Activated T-helper 2 cell treated with anti-CD3 and anti-CD28 coated beads, Interferon-gamma antibody, Interleukin-2, Interleukin-4, amounts not matched to agents 10 μg/mL and 5 μg/mL and 100 μg/mL, durations not matched to agents 14 hours and 24 hours and 36 hours (primary cell): ENCODE measurements at regions of chr7 and their contacts with region 1.

Region 1: DNA sequence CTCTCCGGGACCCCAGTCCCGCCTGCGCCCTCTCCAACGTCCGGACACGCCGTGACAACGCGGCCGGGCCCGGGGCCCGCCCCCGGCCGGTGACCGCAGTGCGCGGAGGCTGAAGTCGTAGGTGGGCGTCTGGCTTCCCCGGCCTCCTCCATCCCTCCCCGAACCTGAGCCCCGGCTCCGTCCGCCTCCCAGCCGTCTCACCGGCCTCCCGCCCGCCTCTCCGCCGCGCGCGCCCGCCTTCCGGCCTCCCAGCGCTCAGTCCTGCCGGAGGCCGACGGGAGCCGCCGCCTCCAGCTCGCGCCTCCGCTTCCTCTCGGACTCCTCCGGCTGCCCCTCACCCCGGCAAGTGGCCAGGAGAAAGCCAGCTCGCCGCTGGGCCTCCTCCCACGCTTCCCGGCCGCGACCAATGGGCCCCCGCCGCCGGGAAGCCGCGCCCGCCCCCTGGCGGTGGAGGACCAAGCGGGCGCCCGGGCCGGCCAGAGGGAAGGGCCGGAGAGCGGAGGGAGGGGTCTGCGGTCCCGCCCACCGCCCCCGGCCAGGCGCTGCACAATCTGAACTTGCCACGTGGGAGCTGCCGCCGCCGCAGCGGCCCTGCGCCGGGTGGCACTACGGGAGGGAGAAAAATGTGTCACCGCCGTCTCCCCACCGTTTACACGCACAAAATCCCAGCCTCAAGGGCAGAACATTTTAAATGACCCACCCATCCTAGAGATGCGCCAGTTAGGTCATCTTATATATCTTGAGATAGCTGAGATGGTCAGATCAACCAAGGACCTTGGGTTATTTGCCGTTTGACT is at the start of gene FAM3C:
- DNase-seq: peak; percentile 78
- H3K4me3 Mint-ChIP-seq: peak within 1 kb of the TSS; percentile 88
- H3K27ac Mint-ChIP-seq: peak within 1 kb of the TSS; percentile 91
- H3K4me1 Mint-ChIP-seq: peaks cover 34% of the 10 kb centered on the region
- H3K27me3 Mint-ChIP-seq: no peaks in the 10 kb centered on the region
- total RNA-seq, gene FAM3C: 57.6 and 59.5 TPM in 2 replicates

Region 2: GRCh38 chr7:120615703-120616102 is 780.5 kb before region 1 on chr7:
- intact Hi-C with region 1: no loop called
- DNase-seq: no peak
- H3K4me3 Mint-ChIP-seq: no peak overlapping the region
- H3K27ac Mint-ChIP-seq: no peak overlapping the region
- H3K4me1 Mint-ChIP-seq: no peaks in the 10 kb centered on the region
- H3K27me3 Mint-ChIP-seq: no peaks in the 10 kb centered on the region

Region 3: GRCh38 chr7:120950539-120951308 is 445.4 kb before region 1 on chr7 and contains the start of gene ING3:
- intact Hi-C with region 1: loop called (anchors 1 kb)
- DNase-seq: peak; percentile 97
- H3K4me3 Mint-ChIP-seq: peak within 1 kb of the TSS; percentile 91
- H3K27ac Mint-ChIP-seq: peak within 1 kb of the TSS; percentile 97
- H3K4me1 Mint-ChIP-seq: peaks cover 24% of the 10 kb centered on the region
- H3K27me3 Mint-ChIP-seq: peaks cover 4% of the 10 kb centered on the region
- total RNA-seq, gene ING3: 22.6 and 22.9 TPM in 2 replicates

Region 4: DNA sequence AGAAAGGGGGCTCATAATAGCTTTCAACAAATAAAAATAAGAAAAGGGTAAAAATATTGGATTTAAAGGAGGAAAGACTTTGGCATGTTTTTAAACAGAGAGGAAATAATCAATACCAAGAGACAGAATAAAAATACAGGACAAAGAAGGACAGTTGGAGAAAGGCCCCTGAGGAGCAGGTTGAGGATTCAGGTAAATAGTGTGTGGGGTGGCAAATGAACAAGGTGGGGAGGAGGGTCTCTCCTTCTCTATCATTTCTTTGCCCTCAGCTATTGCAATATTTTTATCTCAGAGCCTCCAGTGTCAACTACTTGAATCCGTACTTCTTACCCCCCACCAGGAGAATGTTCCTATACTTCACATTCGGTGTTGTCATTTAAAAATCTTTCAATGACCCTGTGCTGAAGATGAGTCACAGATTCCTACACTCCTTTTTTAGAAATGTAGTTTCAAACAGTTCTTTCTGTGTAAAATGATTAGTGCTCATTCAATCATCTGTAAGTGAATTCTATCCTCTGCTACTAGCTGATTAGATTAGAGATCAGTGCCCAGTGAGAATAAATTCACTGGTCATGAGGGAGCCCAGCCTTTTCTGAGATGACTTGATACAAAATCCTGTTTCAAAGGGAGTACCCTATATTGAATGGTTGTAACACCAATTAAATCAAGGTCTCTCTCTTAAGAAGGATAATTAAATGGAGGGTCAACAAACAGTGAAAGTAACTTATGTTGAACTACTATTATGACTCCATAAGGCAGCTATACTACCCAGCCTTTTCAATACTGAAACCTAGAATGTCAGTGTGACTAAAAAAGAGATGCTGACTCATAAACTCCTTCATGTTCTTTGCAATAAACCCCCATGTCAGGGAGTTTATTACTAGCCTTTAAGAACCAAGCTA is 117.8 kb before region 1 on chr7:
- intact Hi-C with region 1: loop called (anchors 2 kb)
- DNase-seq: no peak
- H3K4me3 Mint-ChIP-seq: no peak overlapping the region
- H3K27ac Mint-ChIP-seq: peak overlapping the region; percentile 79
- H3K4me1 Mint-ChIP-seq: peaks cover 37% of the 10 kb centered on the region
- H3K27me3 Mint-ChIP-seq: peaks cover 7% of the 10 kb centered on the region

Region 5: GRCh38 chr7:121372376-121373010 is 23.7 kb before region 1 on chr7:
- intact Hi-C with region 1: loop called (anchors 1 kb)
- DNase-seq: no peak
- H3K4me3 Mint-ChIP-seq: peak overlapping the region; percentile 18
- H3K27ac Mint-ChIP-seq: peak overlapping the region; percentile 50
- H3K4me1 Mint-ChIP-seq: peaks cover 57% of the 10 kb centered on the region
- H3K27me3 Mint-ChIP-seq: no peaks in the 10 kb centered on the region

Region 6: DNA sequence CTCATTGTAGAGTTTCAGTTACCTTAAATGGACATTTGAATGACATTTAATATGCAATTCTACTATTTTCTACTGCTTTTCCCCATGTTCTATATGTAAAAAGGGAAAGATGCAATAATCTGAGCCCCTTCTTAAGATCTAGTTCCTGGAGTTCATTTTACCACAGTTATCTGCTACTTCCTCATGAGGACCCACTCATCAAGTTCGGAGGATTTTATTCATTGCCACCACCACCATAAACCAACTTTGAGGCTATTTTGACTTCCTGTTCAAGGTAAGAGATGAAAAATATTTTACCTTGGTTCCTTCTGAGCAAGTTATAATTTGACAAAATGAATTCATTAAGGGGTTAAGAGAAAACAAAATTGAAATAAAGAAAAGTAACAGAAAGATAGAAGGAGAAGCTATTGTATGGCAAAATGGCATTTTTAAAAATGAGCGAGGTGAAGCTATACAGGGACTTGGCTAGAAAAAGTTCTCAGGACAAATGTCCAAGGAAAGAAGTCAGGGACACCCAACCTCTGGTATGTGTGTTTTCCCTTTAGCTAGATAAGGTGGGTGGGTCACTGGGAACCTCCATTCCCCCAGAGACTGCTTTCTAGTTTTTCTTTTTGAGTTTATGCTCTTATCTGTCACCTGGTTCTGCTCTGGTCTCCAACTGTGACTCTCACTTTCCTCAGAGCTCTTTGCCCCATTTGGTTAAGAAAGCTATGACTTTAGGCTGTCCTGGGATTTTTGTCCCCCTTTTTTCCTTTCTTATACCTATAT is 14.9 kb after region 1 on chr7:
- intact Hi-C with region 1: no loop called
- DNase-seq: no peak
- H3K4me3 Mint-ChIP-seq: no peak overlapping the region
- H3K27ac Mint-ChIP-seq: no peak overlapping the region
- H3K4me1 Mint-ChIP-seq: peaks cover 9% of the 10 kb centered on the region
- H3K27me3 Mint-ChIP-seq: peaks cover 8% of the 10 kb centered on the region

Region 7: DNA sequence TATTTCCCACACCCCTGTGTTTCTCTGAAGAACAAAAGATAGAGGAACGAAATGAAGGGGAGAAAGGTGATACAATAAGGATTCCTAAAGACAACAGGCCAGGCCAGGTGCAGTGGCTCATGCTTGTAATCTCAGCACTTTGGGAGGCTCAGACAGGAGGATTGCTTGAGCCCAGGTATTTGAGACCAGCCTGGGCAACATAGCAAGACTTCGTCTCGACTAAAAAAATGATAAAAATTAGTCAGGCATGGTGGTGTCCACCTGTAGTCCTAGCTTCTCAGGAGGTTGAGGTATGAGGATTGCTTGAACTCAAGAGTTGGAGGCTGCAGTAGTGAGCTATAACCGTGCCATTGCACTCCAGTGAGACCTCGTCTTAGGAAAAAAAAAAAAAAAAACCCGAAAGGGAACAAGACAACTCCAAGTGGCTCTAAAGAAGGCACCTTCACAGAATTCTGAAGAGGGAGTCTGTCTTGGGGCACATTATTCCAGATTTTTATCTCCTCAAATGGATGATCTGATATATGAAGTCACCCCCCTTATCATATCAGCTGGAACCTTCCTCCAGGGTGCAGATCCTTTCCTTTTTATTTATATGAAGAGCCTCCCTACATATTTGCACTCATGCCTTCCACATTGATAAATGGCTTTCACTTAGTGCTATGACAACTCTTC is 41.4 kb after region 1 on chr7:
- intact Hi-C with region 1: loop called (anchors 1 kb)
- DNase-seq: no peak
- H3K4me3 Mint-ChIP-seq: peak overlapping the region; percentile 55
- H3K27ac Mint-ChIP-seq: peak overlapping the region; percentile 86
- H3K4me1 Mint-ChIP-seq: peaks cover 23% of the 10 kb centered on the region
- H3K27me3 Mint-ChIP-seq: no peaks in the 10 kb centered on the region

Region 8: GRCh38 chr7:121530227-121531174 is 134.3 kb after region 1 on chr7:
- intact Hi-C with region 1: loop called (anchors 1 kb)
- DNase-seq: peak; percentile 62
- H3K4me3 Mint-ChIP-seq: peak overlapping the region; percentile 45
- H3K27ac Mint-ChIP-seq: peak overlapping the region; percentile 94
- H3K4me1 Mint-ChIP-seq: peaks cover 40% of the 10 kb centered on the region
- H3K27me3 Mint-ChIP-seq: no peaks in the 10 kb centered on the region

Region 9: DNA sequence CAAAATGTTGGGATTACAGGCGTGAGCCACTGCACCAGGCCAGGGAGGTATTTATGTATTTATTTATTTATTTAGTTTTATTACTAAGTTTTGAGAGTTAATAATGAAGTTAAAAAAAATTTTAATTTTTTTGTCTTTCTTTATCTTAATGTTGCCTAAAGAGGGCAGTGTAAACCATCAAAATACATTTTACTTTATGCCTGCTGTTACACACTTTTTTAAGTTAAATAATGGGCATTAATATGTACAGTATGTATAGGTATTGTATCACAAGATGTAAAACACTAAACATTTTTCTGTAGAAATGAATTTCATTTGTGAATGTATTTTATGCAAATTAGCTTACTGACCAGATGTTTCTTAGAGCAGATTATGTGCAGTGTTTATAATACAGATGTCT is 618.5 kb after region 1 on chr7:
- intact Hi-C with region 1: no loop called
- DNase-seq: no peak
- H3K4me3 Mint-ChIP-seq: no peak overlapping the region
- H3K27ac Mint-ChIP-seq: no peak overlapping the region
- H3K4me1 Mint-ChIP-seq: peaks cover 11% of the 10 kb centered on the region
- H3K27me3 Mint-ChIP-seq: no peaks in the 10 kb centered on the region